PC-9 (cell line): ENCODE measurements at regions of chr7 and their contacts with region 1.

Region 1: DNA sequence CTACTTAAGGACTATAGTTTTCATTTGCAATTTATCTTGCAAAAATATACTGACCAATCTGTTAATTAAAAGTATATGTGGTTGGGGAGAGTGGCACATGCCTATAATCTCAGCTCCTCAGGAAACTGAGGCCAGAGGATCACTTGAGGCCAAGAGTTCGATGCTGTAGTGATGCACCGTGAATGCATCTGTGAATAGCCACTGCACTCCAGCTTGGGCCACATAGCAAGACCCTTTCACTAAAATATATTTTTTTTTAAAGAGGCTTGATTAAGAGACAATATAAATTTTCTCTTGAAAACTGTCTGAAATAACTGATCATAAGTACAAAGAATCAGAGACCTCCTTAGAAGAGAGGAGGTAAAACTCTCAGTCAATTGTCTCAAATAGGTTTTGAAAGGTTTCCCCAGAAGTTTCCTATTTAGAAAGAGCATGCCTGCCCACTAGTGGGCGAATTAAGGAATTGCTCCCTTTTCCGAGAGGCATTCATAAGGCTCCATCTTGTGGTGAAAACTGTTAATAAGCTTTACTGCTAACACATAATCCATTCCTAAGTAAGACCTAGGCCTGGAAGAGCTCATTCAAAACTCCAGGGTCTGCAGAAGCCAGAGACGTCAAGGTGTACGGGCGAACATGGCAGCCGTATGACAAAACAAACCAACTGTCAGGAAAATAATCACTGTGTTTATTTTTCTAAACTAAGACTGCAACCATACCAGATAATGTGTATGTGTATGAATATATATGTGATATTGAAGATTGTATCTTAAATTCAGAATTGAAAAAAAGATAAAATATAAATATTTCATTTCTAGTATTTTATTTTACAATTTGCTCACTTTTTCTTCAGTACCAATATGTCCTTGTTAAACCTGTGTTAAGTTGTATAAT is 6.8 kb upstream of the TAS2R40 start:
- DNase-seq: peak; percentile 61 to 76
- H3K4me3 ChIP-seq: no peak overlapping the region
- H3K27ac ChIP-seq: no peak overlapping the region
- H3K4me1 ChIP-seq: no peaks in the 10 kb centered on the region
- H3K27me3 ChIP-seq: no peaks in the 10 kb centered on the region
- CTCF ChIP-seq: peak; percentile 100

Region 2: GRCh38 chr7:142338633-142339501 is 876.2 kb before region 1 on chr7:
- CTCF ChIA-PET with region 1: interaction called, 5 read pairs
- POLR2A ChIA-PET with region 1: no interaction called
- intact Hi-C with region 1: loop called (anchors 1 kb)
- DNase-seq: peak; percentile 61 to 88
- H3K4me3 ChIP-seq: no peak overlapping the region
- H3K27ac ChIP-seq: no peak overlapping the region
- H3K4me1 ChIP-seq: no peaks in the 10 kb centered on the region
- H3K27me3 ChIP-seq: no peaks in the 10 kb centered on the region
- CTCF ChIP-seq: peak; percentile 76

Region 3: DNA sequence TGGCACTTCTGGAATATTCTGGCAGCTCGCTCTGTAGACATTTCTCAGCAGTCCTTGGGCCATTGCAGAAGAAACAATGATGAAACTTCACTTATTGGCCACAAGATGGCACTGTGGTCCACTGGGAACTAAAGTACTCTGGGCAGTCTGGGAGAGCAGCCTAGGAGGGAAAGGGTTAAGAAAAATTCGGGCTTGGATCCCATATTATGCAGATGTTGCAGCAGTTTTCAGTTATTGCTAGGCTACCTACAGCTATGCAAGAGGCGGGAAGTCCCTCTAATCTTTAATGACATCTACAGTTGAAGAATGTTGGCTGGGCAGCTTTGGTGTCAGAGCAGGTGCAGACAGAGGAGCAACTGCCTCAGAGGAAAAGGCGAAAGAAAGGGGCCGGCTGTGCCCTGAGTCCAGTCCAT is 755.5 kb before region 1 on chr7:
- CTCF ChIA-PET with region 1: interaction called, 5 read pairs
- POLR2A ChIA-PET with region 1: no interaction called
- intact Hi-C with region 1: loop called (anchors 1 kb)
- DNase-seq: peak; percentile 82 to 96
- H3K4me3 ChIP-seq: no peak overlapping the region
- H3K27ac ChIP-seq: peak overlapping the region; percentile 45
- H3K4me1 ChIP-seq: peaks cover 26% of the 10 kb centered on the region
- H3K27me3 ChIP-seq: no peaks in the 10 kb centered on the region
- CTCF ChIP-seq: peak; percentile 91

Region 4: DNA sequence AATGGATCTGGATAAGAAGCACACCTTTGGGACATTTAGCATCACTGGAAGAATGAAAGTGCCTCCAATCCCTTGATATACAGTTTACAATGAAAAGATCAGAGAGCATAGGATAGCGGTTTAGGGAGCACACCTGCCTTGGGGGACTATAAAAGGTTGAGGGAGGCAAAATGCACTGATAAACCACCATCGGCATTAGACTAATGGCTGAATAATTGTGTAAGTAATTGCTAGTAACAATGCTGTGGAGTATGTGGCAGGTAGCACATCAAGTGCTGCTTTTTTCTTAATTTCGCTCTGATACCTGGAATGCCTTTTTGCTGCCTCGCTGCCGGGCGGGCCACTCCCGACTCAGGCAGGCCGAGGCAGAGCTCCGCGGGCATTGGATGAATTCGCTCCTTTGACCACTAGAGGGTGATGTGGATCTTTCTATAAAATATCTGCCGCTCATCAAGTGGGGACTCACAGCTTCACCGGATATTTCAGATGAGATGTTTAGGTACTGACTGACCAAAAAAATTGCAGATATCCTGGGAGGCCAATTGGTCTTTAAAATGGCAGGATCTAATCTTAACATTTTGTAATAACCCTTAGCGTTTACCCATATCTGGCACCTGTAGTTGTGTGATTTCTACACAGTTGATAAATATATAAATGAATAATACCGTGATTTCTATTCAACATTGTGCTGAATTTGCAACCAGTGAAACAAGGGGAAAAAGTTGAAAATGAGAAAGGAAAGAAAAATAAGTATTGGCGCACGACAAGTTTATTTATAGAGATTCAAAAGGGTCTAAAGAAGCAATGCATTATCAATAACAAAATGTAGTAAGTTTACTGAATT is 582.5 kb before region 1 on chr7:
- CTCF ChIA-PET with region 1: interaction called, 3 read pairs
- POLR2A ChIA-PET with region 1: no interaction called
- intact Hi-C with region 1: loop called (anchors 1 kb)
- DNase-seq: peak; percentile 70 to 72
- H3K4me3 ChIP-seq: no peak overlapping the region
- H3K27ac ChIP-seq: no peak overlapping the region
- H3K4me1 ChIP-seq: no peaks in the 10 kb centered on the region
- H3K27me3 ChIP-seq: no peaks in the 10 kb centered on the region
- CTCF ChIP-seq: peak; percentile 93

Region 5: GRCh38 chr7:142960955-142961512 is 254.0 kb before region 1 on chr7:
- CTCF ChIA-PET with region 1: interaction called, 10 read pairs
- POLR2A ChIA-PET with region 1: no interaction called
- intact Hi-C with region 1: no loop called
- DNase-seq: no peak
- H3K4me3 ChIP-seq: no peak overlapping the region
- H3K27ac ChIP-seq: no peak overlapping the region
- H3K4me1 ChIP-seq: peaks cover 26% of the 10 kb centered on the region
- H3K27me3 ChIP-seq: no peaks in the 10 kb centered on the region
- CTCF ChIP-seq: peak; percentile 60

Region 6: GRCh38 chr7:143104832-143105241 is 110.2 kb before region 1 on chr7:
- CTCF ChIA-PET with region 1: no interaction called
- POLR2A ChIA-PET with region 1: no interaction called
- intact Hi-C with region 1: no loop called
- DNase-seq: no peak
- H3K4me3 ChIP-seq: no peak overlapping the region
- H3K27ac ChIP-seq: no peak overlapping the region
- H3K4me1 ChIP-seq: no peaks in the 10 kb centered on the region
- H3K27me3 ChIP-seq: peaks cover 10% of the 10 kb centered on the region
- CTCF ChIP-seq: no peak

Region 7: GRCh38 chr7:143305423-143306070 is 90.5 kb after region 1 on chr7:
- CTCF ChIA-PET with region 1: no interaction called
- POLR2A ChIA-PET with region 1: no interaction called
- intact Hi-C with region 1: loop called (anchors 1 kb)
- DNase-seq: peak in 1 of 2 experiments; percentile 72
- H3K4me3 ChIP-seq: no peak overlapping the region
- H3K27ac ChIP-seq: no peak overlapping the region
- H3K4me1 ChIP-seq: no peaks in the 10 kb centered on the region
- H3K27me3 ChIP-seq: no peaks in the 10 kb centered on the region
- CTCF ChIP-seq: peak; percentile 91